Endothelial cell of umbilical vein (primary cell): ENCODE measurements at regions of chr12 and their contacts with region 1.

Region 1: DNA sequence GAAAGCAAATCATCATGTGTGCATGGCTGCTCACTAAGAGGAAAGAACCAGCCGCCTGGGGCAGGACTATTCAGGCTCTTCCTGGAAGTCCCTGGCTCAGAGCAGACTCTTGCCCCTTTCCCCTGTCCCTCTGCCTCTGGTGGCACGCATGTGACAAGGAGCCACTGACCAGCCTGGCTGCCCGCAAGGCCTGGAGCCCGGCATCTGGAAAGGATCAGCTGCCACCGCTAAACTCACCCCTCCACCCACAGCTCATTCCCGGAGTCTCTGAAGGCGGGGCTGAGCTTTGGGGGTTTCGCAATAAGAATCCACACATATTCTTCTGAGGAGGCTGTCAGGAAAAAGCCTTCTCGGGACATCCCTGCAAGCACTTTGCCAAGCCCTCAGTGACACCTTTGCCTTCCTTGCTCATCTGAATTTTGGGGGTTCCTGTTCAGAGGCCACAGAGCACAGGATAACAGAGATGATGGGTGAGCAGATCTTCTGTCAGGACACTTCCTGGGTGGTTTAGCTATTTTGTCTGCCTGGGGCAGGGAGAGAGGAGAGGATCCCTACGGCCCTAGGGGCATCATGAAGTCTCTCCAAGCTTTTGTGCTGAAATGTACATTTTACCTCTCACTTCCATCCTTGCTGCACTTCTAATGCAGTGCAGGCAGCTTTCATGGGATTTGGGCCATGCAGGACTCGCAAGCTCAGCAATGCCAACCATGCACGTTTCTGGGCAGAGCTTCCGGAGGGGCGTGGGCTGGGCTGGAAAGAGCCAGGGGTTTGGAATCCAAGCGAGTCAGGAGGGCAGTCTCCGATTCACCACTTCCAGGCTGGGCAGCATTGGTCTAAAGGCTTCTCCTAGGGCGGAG is 124.8 kb upstream of the MAP1LC3B2 start:
- DNase-seq: peak; percentile 59
- H3K4me3 ChIP-seq: no peak overlapping the region
- H3K27ac ChIP-seq: no peak overlapping the region
- H3K4me1 ChIP-seq: peaks cover 3% of the 10 kb centered on the region
- H3K27me3 ChIP-seq: no peaks in the 10 kb centered on the region
- CTCF ChIP-seq: no peak
- POLR2A ChIP-seq: no peak

Region 2: GRCh38 chr12:116508145-116509121 is 74.0 kb after region 1 on chr12:
- CTCF ChIA-PET with region 1: no interaction called
- POLR2A ChIA-PET with region 1: no interaction called
- dilution Hi-C with region 1: no loop called
- intact Hi-C with region 1: loop called (anchors 5 kb)
- DNase-seq: no peak
- H3K4me3 ChIP-seq: peak overlapping the region in 2 of 3 experiments; percentile 5 to 36
- H3K27ac ChIP-seq: no peak overlapping the region
- H3K4me1 ChIP-seq: no peaks in the 10 kb centered on the region
- H3K27me3 ChIP-seq: peaks cover 0 to 4% of the 10 kb centered on the region in 2 experiments
- CTCF ChIP-seq: no peak
- POLR2A ChIP-seq: no peak